ENCODE measurements at regions of chr1 and their contacts with region 1.

Region 1: DNA sequence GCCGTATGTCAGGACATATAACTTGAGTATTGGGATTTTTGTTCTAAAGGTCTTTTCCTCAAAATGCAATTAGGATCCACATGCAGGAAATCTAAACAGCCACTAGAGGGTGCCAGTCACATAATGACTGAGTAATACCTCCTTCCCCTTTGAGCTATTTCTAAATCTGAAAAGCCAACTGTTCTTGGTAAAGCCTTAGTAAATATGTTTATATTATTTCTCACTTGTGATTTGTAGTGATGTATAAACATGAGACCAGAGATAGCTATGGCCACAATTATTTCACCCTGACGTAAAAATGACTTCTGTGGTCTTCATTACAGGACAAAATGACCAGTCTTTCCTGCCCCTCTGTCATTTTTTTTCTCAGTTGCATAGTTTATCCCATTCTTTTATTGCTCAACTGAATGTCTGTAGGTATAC is 41.0 kb upstream of the DR1 start:
- DNase-seq: peak; percentile 54
- H3K4me3 ChIP-seq: no peak overlapping the region
- H3K27ac ChIP-seq: no peak overlapping the region
- H3K4me1 ChIP-seq: no peaks in the 10 kb centered on the region
- H3K27me3 ChIP-seq: no peaks in the 10 kb centered on the region
- CTCF ChIP-seq: peak; percentile 63 to 66
- POLR2A ChIP-seq: no peak

Region 2: GRCh38 chr1:93021539-93022134 is 283.1 kb before region 1 on chr1:
- CTCF ChIA-PET with region 1: interaction called, 4 read pairs
- POLR2A ChIA-PET with region 1: no interaction called
- dilution Hi-C with region 1: no loop called
- intact Hi-C with region 1: loop called (anchors 1 kb)
- DNase-seq: peak; percentile 57
- H3K4me3 ChIP-seq: no peak overlapping the region
- H3K27ac ChIP-seq: no peak overlapping the region
- H3K4me1 ChIP-seq: peaks cover 2% of the 10 kb centered on the region
- H3K27me3 ChIP-seq: peaks cover 16 to 17% of the 10 kb centered on the region in 2 experiments
- CTCF ChIP-seq: peak; percentile 55 to 59
- POLR2A ChIP-seq: no peak

Region 3: GRCh38 chr1:93328809-93329760 is 24.4 kb after region 1 on chr1:
- CTCF ChIA-PET with region 1: interaction called, 17 read pairs
- POLR2A ChIA-PET with region 1: no interaction called
- dilution Hi-C with region 1: no loop called
- intact Hi-C with region 1: no loop called
- DNase-seq: no peak
- H3K4me3 ChIP-seq: no peak overlapping the region
- H3K27ac ChIP-seq: no peak overlapping the region
- H3K4me1 ChIP-seq: no peaks in the 10 kb centered on the region
- H3K27me3 ChIP-seq: no peaks in the 10 kb centered on the region
- CTCF ChIP-seq: no peak
- POLR2A ChIP-seq: no peak

Region 4: DNA sequence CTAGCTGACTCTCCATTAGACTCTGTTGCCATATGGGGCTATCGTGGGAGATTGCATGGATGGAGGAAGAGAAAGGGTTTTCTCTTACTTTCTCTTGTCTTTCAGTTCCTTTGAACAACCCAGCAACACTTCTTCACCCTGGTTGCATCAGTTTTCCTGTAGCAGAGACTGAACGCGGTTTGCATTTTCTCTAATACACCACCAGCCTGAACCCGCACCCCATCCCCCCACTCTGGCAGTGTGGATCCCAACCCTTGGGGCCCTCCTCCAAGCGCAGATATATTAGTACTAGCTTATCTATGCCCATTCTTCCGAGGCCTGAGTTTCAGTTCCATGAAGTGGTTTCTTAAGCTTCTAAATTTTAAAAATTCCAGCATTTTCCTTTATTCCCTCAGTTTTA is 53.6 kb after region 1 on chr1:
- CTCF ChIA-PET with region 1: interaction called, 11 read pairs
- POLR2A ChIA-PET with region 1: no interaction called
- dilution Hi-C with region 1: no loop called
- intact Hi-C with region 1: no loop called
- DNase-seq: no peak
- H3K4me3 ChIP-seq: no peak overlapping the region
- H3K27ac ChIP-seq: no peak overlapping the region
- H3K4me1 ChIP-seq: no peaks in the 10 kb centered on the region
- H3K27me3 ChIP-seq: no peaks in the 10 kb centered on the region
- CTCF ChIP-seq: no peak
- POLR2A ChIP-seq: no peak

Region 5: DNA sequence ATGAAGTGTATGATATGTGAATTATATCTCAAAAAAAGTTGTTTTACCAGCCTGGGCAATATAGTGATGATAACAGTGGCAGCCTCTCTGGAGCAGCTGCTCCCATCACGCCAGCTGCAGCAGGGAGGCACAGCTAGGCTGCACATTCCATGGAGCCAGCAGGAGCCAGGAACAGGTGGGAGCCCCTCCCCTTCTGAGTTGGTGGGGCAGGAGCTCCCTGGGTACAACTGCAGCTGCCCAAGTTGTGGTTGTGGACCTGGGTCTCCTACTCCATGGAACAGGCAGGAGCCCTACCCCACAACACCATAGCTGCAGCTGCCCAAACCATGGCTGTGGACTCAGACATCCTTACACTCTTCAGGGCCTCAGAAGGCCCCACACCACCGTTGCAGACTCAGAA is 121.5 kb after region 1 on chr1:
- CTCF ChIA-PET with region 1: interaction called, 93 read pairs
- POLR2A ChIA-PET with region 1: no interaction called
- dilution Hi-C with region 1: no loop called
- intact Hi-C with region 1: no loop called
- DNase-seq: no peak
- H3K4me3 ChIP-seq: no peak overlapping the region
- H3K27ac ChIP-seq: no peak overlapping the region
- H3K4me1 ChIP-seq: no peaks in the 10 kb centered on the region
- H3K27me3 ChIP-seq: peaks cover 0 to 3% of the 10 kb centered on the region in 2 experiments
- CTCF ChIP-seq: no peak
- POLR2A ChIP-seq: no peak

Region 6: GRCh38 chr1:93567255-93567918 is 262.7 kb after region 1 on chr1:
- CTCF ChIA-PET with region 1: interaction called, 3 read pairs
- POLR2A ChIA-PET with region 1: no interaction called
- dilution Hi-C with region 1: no loop called
- intact Hi-C with region 1: loop called (anchors 5 kb)
- DNase-seq: peak; percentile 81
- H3K4me3 ChIP-seq: no peak overlapping the region
- H3K27ac ChIP-seq: peak overlapping the region; percentile 34
- H3K4me1 ChIP-seq: peaks cover 24% of the 10 kb centered on the region
- H3K27me3 ChIP-seq: no peaks in the 10 kb centered on the region
- CTCF ChIP-seq: no peak
- POLR2A ChIP-seq: no peak

Region 7: DNA sequence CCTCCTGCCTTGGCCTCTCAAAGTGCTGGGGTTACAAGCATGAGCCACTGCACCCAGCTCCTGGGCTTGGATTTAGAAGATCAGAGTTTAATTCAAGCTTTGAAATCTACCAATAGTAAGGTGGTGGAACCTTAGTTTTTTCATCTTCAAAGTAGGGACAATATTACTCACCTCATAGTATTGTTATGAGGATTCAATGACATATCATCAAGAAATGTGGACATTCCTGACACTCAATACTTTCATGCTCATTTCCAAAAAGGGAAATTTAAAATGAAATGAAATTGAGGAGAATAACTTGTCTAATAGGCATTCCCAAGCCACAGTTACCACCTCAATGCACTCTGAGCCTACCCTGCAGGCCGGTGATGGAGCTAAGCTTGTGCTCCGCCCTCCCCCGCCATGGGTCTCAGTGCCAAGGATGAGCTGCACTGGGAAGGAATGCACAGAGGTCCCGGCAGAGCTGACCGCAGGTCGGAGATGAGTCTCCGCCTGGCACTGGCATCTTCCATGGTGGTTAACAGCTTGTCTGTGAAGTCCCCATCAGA is 433.4 kb after region 1 on chr1:
- CTCF ChIA-PET with region 1: no interaction called
- POLR2A ChIA-PET with region 1: no interaction called
- dilution Hi-C with region 1: no loop called
- intact Hi-C with region 1: no loop called
- DNase-seq: no peak
- H3K4me3 ChIP-seq: no peak overlapping the region
- H3K27ac ChIP-seq: no peak overlapping the region
- H3K4me1 ChIP-seq: no peaks in the 10 kb centered on the region
- H3K27me3 ChIP-seq: no peaks in the 10 kb centered on the region
- CTCF ChIP-seq: no peak
- POLR2A ChIP-seq: no peak